ENCODE measurements at regions of chr11 and their contacts with region 1.

Region 1: DNA sequence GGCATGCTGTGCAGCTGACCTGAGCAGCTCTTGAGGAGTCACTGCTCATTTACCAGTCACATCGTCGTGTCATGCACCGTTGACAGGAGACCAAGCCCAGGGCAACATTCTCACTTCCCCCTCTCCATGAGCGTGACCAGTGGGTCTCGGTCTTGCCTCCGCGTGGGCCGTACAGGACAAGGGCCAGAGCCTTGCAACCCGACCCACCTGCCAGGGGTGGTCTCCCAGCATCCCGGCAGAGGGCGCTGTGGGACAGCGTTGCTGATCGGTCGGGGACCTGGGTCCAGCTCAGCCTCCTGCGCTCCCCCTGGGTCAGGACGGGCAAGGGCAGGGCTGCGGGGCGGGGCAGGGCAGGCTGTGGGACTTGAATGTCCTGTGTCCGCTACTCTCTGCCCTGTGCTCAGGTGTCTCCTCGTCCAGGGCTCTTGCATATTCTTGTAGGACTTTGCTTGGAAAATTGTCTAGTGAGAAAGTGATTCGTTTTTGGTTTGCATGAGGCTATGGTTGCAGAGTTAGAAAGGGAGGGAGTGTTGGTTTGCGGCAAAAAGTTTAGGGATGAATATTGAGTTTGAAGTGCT is 16.2 kb downstream of the EIF4G2 start:
- DNase-seq: peak; percentile 89
- CTCF ChIP-seq: peak; percentile 99

Region 2: DNA sequence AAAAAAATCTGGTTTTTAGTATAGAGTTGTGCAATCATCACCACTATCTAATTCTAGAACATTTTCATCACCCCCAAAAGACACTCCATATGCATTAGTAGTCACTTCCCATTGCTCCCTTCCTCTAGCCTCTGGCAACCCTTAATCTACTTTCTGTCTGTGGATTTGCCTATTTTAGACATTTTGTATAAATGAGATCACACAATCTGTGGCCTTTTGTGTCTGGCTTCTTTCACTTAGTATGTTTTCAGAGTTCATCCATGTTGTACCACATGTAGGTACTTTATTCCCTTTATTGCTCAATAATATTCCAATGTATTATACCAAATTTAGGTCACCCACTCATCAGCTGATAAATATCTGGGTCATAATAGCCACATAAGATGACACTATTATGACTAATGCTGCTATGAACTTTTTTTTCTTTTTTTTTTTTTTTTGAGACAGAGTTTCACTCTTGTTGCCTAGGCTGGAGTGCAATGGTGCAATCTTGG is 1633.5 kb before region 1 on chr11:
- CTCF ChIA-PET with region 1: no interaction called
- POLR2A ChIA-PET with region 1: no interaction called
- DNase-seq: no peak
- CTCF ChIP-seq: no peak

Region 3: GRCh38 chr11:10612216-10612862 is 180.1 kb before region 1 on chr11:
- CTCF ChIA-PET with region 1: no interaction called
- POLR2A ChIA-PET with region 1: no interaction called
- DNase-seq: no peak
- CTCF ChIP-seq: no peak

Region 4: GRCh38 chr11:10743354-10744000 is 49.0 kb before region 1 on chr11:
- CTCF ChIA-PET with region 1: no interaction called
- POLR2A ChIA-PET with region 1: no interaction called
- DNase-seq: no peak
- CTCF ChIP-seq: no peak

Region 5: GRCh38 chr11:10770626-10771254 is 21.7 kb before region 1 on chr11:
- CTCF ChIA-PET with region 1: interaction called, 37 read pairs
- POLR2A ChIA-PET with region 1: no interaction called
- DNase-seq: peak; percentile 33
- CTCF ChIP-seq: peak; percentile 55

Region 6: GRCh38 chr11:10803676-10804075 is 11.2 kb after region 1 on chr11:
- CTCF ChIA-PET with region 1: interaction called, 81 read pairs
- POLR2A ChIA-PET with region 1: interaction called, 79 read pairs
- DNase-seq: no peak
- CTCF ChIP-seq: no peak

Region 7: GRCh38 chr11:10906513-10906912 is 114.0 kb after region 1 on chr11:
- CTCF ChIA-PET with region 1: interaction called, 23 read pairs
- POLR2A ChIA-PET with region 1: no interaction called
- DNase-seq: no peak
- CTCF ChIP-seq: no peak

Region 8: GRCh38 chr11:11016068-11016467 is 223.6 kb after region 1 on chr11:
- CTCF ChIA-PET with region 1: interaction called, 56 read pairs
- POLR2A ChIA-PET with region 1: no interaction called
- DNase-seq: no peak
- CTCF ChIP-seq: no peak

Region 9: DNA sequence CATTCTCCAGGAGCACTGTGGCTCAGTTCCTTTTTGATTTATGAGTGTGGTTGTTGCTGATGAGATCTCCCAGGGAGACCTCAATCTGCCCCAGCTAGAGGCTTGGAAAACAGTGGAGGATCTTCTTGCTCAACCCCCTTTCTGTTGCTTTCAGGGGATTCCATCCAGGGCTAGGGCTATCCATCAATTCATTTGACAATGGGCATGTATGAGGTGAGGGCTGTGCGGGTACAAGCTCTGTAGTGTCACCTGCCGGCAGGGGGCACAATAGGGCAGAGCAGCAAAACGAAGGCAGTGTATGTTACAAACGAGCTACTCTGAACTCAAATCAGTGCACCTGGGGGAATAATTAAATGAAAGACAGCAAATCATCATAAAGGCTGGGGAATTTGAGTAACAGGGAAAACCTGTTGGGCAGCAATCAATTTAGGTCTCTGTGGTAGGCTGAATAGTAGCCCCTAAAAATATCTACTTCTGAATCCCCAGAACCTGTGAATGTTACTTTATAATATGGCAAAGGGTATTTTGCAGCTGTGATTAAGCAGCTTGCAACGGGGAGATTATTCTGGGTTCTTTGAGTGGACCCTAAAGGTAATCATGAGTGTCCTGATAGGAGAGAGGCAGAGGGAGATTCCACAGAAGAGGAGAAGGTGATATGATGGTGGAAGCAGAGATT is 235.7 kb after region 1 on chr11:
- CTCF ChIA-PET with region 1: interaction called, 35 read pairs
- POLR2A ChIA-PET with region 1: no interaction called
- DNase-seq: peak; percentile 53
- CTCF ChIP-seq: peak; percentile 86